WTC11 (cell line): ENCODE measurements at regions of chr2 and their contacts with region 1.

Region 1: GRCh38 chr2:218322895-218323808 is 30.8 kb upstream of the TMBIM1 start:
- DNase-seq: peak; percentile 89
- ATAC-seq: peak; percentile 85
- H3K4me3 Mint-ChIP-seq: peak overlapping the region; percentile 98
- H3K27ac Mint-ChIP-seq: peak overlapping the region; percentile 94
- H3K4me1 Mint-ChIP-seq: peaks cover 51% of the 10 kb centered on the region
- H3K27me3 Mint-ChIP-seq: no peaks in the 10 kb centered on the region
- CTCF ChIP-seq: no peak

Region 2: GRCh38 chr2:218229239-218229638 is 93.9 kb before region 1 on chr2:
- CTCF ChIA-PET with region 1: no interaction called
- POLR2A ChIA-PET with region 1: no interaction called
- DNase-seq: no peak
- ATAC-seq: no peak
- H3K4me3 Mint-ChIP-seq: no peak overlapping the region
- H3K27ac Mint-ChIP-seq: no peak overlapping the region
- H3K4me1 Mint-ChIP-seq: no peaks in the 10 kb centered on the region
- H3K27me3 Mint-ChIP-seq: no peaks in the 10 kb centered on the region
- CTCF ChIP-seq: no peak

Region 3: DNA sequence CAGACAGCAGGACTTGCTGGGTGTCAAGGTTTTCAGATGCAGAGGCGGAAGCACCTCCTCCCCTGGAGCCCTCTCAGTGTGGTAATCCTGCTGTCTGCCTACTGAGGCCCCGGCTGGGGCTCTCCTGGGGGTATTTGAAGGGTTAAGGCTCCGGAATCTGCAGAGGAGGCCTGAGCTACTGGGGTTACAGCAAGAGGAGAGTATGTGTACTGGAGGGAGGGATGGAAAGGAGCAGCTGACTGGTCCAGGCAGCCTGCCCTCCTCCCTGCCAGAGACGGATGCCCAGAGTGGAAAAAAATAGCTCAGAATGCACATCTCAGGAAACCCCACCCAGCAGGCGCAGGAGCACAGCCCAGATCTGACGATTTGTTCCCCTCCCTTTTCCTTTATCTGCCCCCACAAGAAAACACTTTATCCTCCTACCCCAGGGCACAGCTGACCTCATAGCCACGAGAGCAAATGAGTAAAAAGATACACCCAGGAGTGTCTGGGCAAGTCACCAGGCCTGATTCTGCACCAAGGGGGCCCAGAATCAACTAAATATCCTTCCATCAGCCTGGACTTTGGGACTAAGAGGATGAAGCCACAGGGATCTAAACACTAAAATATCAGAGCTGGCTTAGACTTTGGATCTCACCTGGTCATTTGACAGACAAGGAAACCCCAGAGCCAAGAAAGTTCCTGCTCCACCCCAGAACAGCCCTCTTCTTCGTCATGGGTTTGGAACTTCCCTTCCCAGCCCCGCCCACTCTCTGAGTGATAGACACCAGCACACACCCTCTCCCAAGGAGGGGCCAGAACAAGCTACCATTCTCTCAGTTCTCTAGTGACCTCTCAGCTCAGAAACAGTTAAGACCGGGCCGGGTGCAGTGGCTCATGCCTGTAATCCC is 36.3 kb before region 1 on chr2:
- CTCF ChIA-PET with region 1: interaction called, 6 read pairs
- POLR2A ChIA-PET with region 1: interaction called, 10 read pairs
- DNase-seq: peak; percentile 78
- ATAC-seq: peak; percentile 93
- H3K4me3 Mint-ChIP-seq: no peak overlapping the region; the same call in 1 of the 2 replicates
- H3K27ac Mint-ChIP-seq: peak overlapping the region; percentile 43
- H3K4me1 Mint-ChIP-seq: peaks cover 26% of the 10 kb centered on the region
- H3K27me3 Mint-ChIP-seq: 0 out of 2 replicates have a peak, but pooled peaks cover 4% of the 10 kb centered on the region
- CTCF ChIP-seq: no peak